Activated T-helper 1 cell treated with anti-CD3 and anti-CD28 coated beads, Interleukin-12 subunit alpha, Interleukin-12 subunit beta, Interleukin-2, Interleukin-4 antibody, amounts not matched to agents 30 ng/mL and 10 ng/mL and 1 ng/mL, durations not matched to agents 14 hours and 24 hours and 36 hours (primary cell): ENCODE measurements at regions of chr3 and their contacts with region 1.

Region 1: GRCh38 chr3:106609666-106610301 is 741.0 kb upstream of the CBLB start:
- DNase-seq: peak; percentile 50
- H3K4me3 Mint-ChIP-seq: no peak overlapping the region
- H3K27ac Mint-ChIP-seq: peak overlapping the region; percentile 66
- H3K4me1 Mint-ChIP-seq: peaks cover 30% of the 10 kb centered on the region
- H3K27me3 Mint-ChIP-seq: no peaks in the 10 kb centered on the region

Region 2: GRCh38 chr3:105686278-105686897 is 923.4 kb before region 1 on chr3:
- intact Hi-C with region 1: loop called (anchors 2 kb)
- DNase-seq: no peak
- H3K4me3 Mint-ChIP-seq: no peak overlapping the region
- H3K27ac Mint-ChIP-seq: peak overlapping the region; percentile 54
- H3K4me1 Mint-ChIP-seq: peaks cover 32% of the 10 kb centered on the region
- H3K27me3 Mint-ChIP-seq: no peaks in the 10 kb centered on the region

Region 3: GRCh38 chr3:106215047-106215446 is 394.7 kb before region 1 on chr3:
- intact Hi-C with region 1: loop called (anchors 1 kb)
- DNase-seq: peak; percentile 5
- H3K4me3 Mint-ChIP-seq: peak overlapping the region; percentile 43
- H3K27ac Mint-ChIP-seq: peak overlapping the region; percentile 82
- H3K4me1 Mint-ChIP-seq: peaks cover 56% of the 10 kb centered on the region
- H3K27me3 Mint-ChIP-seq: no peaks in the 10 kb centered on the region

Region 4: GRCh38 chr3:106247902-106248684 is 361.7 kb before region 1 on chr3:
- intact Hi-C with region 1: loop called (anchors 1 kb)
- DNase-seq: no peak
- H3K4me3 Mint-ChIP-seq: peak overlapping the region; percentile 16
- H3K27ac Mint-ChIP-seq: peak overlapping the region; percentile 67
- H3K4me1 Mint-ChIP-seq: peaks cover 32% of the 10 kb centered on the region
- H3K27me3 Mint-ChIP-seq: no peaks in the 10 kb centered on the region

Region 5: DNA sequence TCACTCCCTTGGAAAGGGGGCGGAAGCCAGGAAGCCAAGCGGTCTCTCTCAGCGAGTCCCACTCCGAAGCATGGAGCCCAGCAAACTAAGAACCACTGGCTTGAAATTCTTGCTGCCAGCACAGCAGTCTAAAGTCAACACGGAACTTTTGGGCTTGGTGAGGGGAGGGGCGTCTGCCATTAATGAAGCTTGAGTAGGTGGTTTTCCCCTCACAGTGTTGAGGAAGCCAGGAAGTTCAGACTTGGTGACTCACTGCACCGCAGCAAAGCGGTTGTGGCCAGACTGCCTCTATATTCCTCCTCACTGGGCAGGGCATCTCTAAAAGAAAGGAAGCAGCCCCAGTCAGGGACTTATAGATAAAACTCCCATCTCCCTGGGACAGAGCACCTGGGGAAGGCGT is 75.6 kb before region 1 on chr3:
- intact Hi-C with region 1: loop called (anchors 1 kb)
- DNase-seq: peak; percentile 40
- H3K4me3 Mint-ChIP-seq: no peak overlapping the region
- H3K27ac Mint-ChIP-seq: peak overlapping the region; percentile 72
- H3K4me1 Mint-ChIP-seq: peaks cover 28% of the 10 kb centered on the region
- H3K27me3 Mint-ChIP-seq: no peaks in the 10 kb centered on the region